Endothelial cell of umbilical vein (primary cell): ENCODE measurements at regions of chr19 and their contacts with region 1.

Region 1: DNA sequence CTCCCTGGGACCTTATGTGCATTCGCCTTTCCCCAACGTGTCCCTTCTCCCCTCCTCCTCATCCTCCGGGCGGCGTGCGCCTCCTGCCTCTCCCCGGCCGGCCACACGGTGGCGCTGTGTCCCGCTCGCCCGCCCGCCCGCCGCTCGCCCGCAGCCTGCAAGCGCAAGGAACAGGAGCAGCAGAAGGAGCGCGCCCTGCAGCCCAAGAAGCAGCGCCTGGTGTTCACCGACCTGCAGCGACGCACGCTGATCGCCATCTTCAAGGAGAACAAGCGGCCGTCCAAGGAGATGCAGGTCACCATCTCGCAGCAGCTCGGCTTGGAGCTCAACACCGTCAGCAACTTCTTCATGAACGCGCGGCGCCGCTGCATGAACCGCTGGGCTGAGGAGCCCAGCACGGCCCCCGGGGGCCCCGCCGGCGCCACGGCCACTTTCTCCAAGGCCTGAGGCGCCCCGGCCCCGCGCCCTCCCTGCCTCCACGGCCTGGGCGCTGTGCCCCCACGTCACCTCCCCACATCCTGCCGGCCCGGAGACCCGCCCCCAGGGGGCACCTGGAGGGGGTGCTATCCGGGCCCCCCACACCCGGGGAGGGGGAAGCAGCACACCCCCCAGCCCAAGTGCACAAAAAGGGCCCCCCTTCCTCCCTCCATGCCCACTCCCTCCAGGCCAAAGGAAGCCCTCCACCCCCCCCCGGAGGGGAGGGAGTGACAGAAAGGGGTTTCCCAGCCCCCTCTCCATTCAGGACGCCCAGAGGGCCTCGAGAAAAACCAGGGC is 21.9 kb downstream of the ONECUT3 start:
- DNase-seq: no peak
- H3K4me3 ChIP-seq: no peak overlapping the region
- H3K27ac ChIP-seq: no peak overlapping the region
- H3K4me1 ChIP-seq: no peaks in the 10 kb centered on the region
- H3K27me3 ChIP-seq: peaks cover 28 to 34% of the 10 kb centered on the region in 2 experiments
- CTCF ChIP-seq: peak; percentile 39 to 64
- POLR2A ChIP-seq: no peak

Region 2: DNA sequence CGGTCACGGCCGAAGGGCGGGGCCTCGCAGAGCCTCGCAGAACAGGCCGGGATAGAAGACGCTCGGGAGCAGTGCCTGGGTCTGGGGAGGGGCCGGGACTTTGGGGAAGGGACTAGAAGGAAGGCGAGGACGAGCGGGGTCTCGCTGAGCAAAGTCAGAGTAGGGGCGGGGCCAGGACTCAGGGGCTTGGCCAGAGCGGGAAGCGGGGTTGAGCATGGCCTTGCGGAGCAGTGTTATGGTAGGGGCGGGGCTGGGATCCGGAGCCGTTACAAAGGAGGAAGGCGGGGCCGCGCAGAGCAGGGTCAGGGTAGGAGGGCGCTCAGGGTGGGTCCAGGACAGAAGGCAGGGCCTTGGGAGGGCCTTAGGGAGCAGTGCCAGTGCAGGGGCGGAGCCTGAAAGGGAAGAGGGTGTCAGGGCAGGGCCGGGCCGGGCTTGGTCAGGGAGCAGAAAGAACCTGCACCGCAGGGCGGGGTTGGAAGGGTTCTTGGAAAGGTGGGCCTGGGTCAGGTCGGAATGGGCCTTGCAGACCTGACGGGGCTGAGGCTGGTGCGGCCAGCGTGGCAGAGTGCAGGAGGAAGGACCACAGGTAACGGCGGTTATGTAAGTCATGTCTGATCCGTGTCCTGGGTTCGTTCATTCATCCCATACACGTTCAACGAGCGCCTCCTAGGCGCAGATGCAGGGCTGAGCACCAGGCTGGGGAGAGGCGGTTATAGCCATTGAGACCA is 37.4 kb after region 1 on chr19:
- CTCF ChIA-PET with region 1: no interaction called
- POLR2A ChIA-PET with region 1: no interaction called
- dilution Hi-C with region 1: no loop called
- intact Hi-C with region 1: loop called (anchors 5 kb)
- DNase-seq: peak; percentile 88
- H3K4me3 ChIP-seq: peak overlapping the region; percentile 36 to 66 (median 39)
- H3K27ac ChIP-seq: peak overlapping the region; percentile 48
- H3K4me1 ChIP-seq: peaks cover 13% of the 10 kb centered on the region
- H3K27me3 ChIP-seq: no peaks in the 10 kb centered on the region
- CTCF ChIP-seq: peak; percentile 47 to 62
- POLR2A ChIP-seq: no peak

Region 3: DNA sequence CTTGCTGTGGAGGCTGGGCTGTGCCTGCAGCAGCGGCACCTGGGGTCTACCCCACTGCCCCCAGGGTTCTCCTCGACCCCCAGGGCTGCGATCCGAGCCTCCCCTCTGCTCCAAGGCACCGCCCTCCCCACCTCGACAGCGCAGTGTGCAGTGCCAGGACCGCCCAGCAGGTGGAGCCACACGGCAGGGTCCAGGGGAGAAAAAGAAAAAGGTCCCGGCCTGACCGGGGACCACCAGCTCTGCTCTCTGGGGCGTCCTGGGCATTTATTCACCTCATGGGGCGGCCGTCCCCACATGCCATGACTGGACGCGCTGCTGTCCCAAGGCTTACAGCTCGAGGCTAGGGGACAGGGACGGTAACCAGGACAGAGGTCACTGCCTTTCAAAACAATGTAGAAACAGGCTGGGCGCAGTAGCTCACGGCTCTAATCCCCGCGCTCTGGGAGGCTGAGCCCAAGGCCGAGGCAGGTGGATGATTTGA is 62.5 kb after region 1 on chr19:
- CTCF ChIA-PET with region 1: no interaction called
- POLR2A ChIA-PET with region 1: no interaction called
- dilution Hi-C with region 1: no loop called
- intact Hi-C with region 1: no loop called
- DNase-seq: peak; percentile 44
- H3K4me3 ChIP-seq: no peak overlapping the region
- H3K27ac ChIP-seq: no peak overlapping the region
- H3K4me1 ChIP-seq: peaks cover 16% of the 10 kb centered on the region
- H3K27me3 ChIP-seq: no peaks in the 10 kb centered on the region
- CTCF ChIP-seq: peak; percentile 92 to 97
- POLR2A ChIP-seq: no peak

Region 4: GRCh38 chr19:1884719-1885334 is 109.6 kb after region 1 on chr19:
- CTCF ChIA-PET with region 1: no interaction called
- POLR2A ChIA-PET with region 1: no interaction called
- dilution Hi-C with region 1: no loop called
- intact Hi-C with region 1: no loop called
- DNase-seq: no peak
- H3K4me3 ChIP-seq: peak overlapping the region; percentile 83 to 92 (median 88)
- H3K27ac ChIP-seq: peak overlapping the region; percentile 78
- H3K4me1 ChIP-seq: peaks cover 27% of the 10 kb centered on the region
- H3K27me3 ChIP-seq: no peaks in the 10 kb centered on the region
- CTCF ChIP-seq: no peak
- POLR2A ChIP-seq: peak; percentile 61